Activated naive CD4-positive, alpha-beta T cell treated with anti-CD3 and anti-CD28 coated beads for 36 hours (primary cell): ENCODE measurements at regions of chr12 and their contacts with region 1.

Region 1: DNA sequence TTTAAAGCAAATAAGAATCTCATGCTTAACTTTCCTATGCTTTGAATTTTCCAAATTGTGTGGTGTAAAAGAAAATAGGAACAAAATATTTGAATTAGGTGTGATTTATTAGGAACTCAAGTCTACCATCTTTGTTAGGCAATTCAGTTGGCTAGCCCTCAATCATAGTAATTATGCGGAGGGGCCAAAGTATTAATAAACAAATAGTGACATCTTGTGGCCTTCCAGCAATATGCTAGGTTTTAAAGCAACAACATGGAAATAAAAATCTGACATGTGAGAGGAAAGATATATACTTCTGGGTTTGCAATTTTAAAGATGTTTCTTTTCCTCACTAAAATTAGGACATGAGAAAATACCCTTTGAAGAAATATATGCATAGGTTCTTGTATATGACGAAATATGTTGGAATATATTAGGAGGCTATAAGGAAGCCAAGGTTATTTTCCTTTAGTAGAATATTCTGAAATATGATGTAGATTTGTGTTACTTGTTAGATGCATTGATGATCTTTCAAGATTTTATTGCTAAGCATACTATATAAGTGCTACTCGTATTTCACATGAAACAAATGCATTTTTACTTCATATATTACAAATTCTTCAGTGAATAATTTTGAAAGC is 200.4 kb downstream of the PTPRO start:
- DNase-seq: no peak
- H3K4me3 Mint-ChIP-seq: no peak overlapping the region
- H3K27ac Mint-ChIP-seq: no peak overlapping the region
- H3K4me1 Mint-ChIP-seq: peaks cover 4% of the 10 kb centered on the region
- H3K27me3 Mint-ChIP-seq: peaks cover 14% of the 10 kb centered on the region

Region 2: GRCh38 chr12:15151161-15152120 is 371.2 kb before region 1 on chr12:
- CTCF ChIA-PET with region 1: interaction called, 5 read pairs
- intact Hi-C with region 1: loop called (anchors 1 kb)
- DNase-seq: no peak
- H3K4me3 Mint-ChIP-seq: no peak overlapping the region
- H3K27ac Mint-ChIP-seq: no peak overlapping the region
- H3K4me1 Mint-ChIP-seq: no peaks in the 10 kb centered on the region
- H3K27me3 Mint-ChIP-seq: peaks cover 8% of the 10 kb centered on the region

Region 3: DNA sequence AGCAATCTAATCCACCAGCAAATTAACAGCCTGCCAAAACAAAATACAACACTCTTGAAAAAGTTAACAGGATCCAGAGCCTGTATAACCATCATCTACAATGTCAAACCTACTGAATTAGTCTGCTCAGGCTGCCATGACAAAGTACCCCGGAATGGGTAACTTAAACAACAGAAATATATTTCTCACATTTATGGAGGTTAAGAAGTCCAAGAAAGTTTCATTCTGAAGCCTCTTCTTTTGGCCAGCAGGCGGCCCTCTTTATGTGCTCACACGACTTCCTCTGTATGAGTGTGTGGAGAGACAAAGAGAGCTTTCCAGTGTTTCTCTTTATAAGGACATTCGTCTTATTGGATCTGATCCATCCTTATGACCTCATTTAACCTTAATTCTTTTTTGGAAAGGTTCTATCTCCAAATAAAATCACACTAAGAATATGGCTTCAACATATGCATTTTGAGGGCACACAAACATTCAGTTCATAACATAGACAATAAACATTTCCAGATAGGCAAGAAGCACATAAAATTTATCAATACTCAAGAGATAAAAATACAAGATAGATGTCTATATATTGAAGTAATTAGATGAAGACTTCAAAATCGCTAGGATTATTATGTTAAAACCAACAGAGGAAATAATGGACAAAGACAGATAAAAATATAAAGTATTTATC is 295.5 kb before region 1 on chr12:
- CTCF ChIA-PET with region 1: no interaction called
- intact Hi-C with region 1: loop called (anchors 1 kb)
- DNase-seq: peak; percentile 56
- H3K4me3 Mint-ChIP-seq: no peak overlapping the region
- H3K27ac Mint-ChIP-seq: no peak overlapping the region
- H3K4me1 Mint-ChIP-seq: no peaks in the 10 kb centered on the region
- H3K27me3 Mint-ChIP-seq: peaks cover 18% of the 10 kb centered on the region

Region 4: GRCh38 chr12:15276088-15276698 is 246.5 kb before region 1 on chr12:
- CTCF ChIA-PET with region 1: interaction called, 11 read pairs
- intact Hi-C with region 1: loop called (anchors 1 kb)
- DNase-seq: no peak
- H3K4me3 Mint-ChIP-seq: no peak overlapping the region
- H3K27ac Mint-ChIP-seq: no peak overlapping the region
- H3K4me1 Mint-ChIP-seq: peaks cover 3% of the 10 kb centered on the region
- H3K27me3 Mint-ChIP-seq: peaks cover 5% of the 10 kb centered on the region

Region 5: DNA sequence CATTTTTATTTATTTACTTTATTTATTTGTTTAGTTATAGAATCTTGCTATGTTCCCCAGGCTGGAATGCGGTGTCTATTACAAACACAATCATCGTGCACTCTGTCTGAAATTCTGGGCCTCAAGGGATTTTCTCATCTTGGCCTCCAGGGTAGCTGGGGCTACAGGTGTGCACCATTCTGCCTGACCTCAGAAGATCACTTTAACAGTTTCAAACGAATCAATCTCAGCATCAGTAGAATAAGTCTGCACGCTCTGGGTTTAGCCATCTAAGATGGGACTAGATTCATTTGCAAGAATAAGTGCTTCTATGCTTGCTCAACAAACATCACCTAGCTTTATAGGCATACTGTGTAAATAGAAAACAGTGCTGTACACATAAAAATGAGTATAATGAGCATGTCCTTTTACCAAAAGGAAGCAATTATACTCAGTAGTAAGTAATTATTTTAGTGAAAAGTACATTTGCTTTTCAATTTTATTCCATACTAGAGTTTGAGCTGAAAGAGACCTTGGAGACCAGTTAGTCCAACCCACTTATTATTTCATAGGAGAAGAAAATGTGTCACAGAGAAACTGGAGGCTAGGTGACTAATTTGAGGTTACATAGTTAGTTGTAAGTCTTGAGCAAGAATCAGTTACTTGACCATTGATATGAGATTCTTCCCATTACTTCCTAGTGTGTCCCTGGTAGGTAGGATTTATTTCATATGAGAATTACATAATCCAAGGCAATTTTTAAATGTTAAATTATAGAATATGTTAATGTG is 1539.8 kb after region 1 on chr12:
- CTCF ChIA-PET with region 1: no interaction called
- intact Hi-C with region 1: no loop called
- DNase-seq: no peak
- H3K4me3 Mint-ChIP-seq: no peak overlapping the region
- H3K27ac Mint-ChIP-seq: no peak overlapping the region
- H3K4me1 Mint-ChIP-seq: no peaks in the 10 kb centered on the region
- H3K27me3 Mint-ChIP-seq: no peaks in the 10 kb centered on the region